ENCODE measurements at regions of chr1 and their contacts with region 1.

Region 1: GRCh38 chr1:108828022-108828961 is 28.6 kb downstream of the AKNAD1 start:
- DNase-seq: peak; percentile 76 to 82 (median 78)
- H3K4me3 ChIP-seq: no peak overlapping the region
- H3K27ac ChIP-seq: no peak overlapping the region
- H3K4me1 ChIP-seq: peaks cover 0 to 22% (median 12%) of the 10 kb centered on the region in 4 experiments
- H3K27me3 ChIP-seq: no peaks in the 10 kb centered on the region

Region 2: GRCh38 chr1:108661030-108661620 is 167.2 kb before region 1 on chr1 and contains the start of gene HENMT1:
- CTCF ChIA-PET with region 1: no interaction called
- POLR2A ChIA-PET with region 1: no interaction called
- DNase-seq: peak; percentile 91 to 95 (median 94)
- H3K4me3 ChIP-seq: peak within 1 kb of the TSS; percentile 35 to 80 (median 63)
- H3K27ac ChIP-seq: peak within 1 kb of the TSS; percentile 89 to 94
- H3K4me1 ChIP-seq: peaks cover 17 to 58% (median 32%) of the 10 kb centered on the region in 4 experiments
- H3K27me3 ChIP-seq: no peaks in the 10 kb centered on the region

Region 3: GRCh38 chr1:108691942-108692723 is 136.2 kb before region 1 on chr1 and contains the start of gene PRPF38B:
- CTCF ChIA-PET with region 1: no interaction called
- POLR2A ChIA-PET with region 1: no interaction called
- DNase-seq: peak; percentile 94 to 98 (median 97)
- H3K4me3 ChIP-seq: peak within 1 kb of the TSS; percentile 76 to 99 (median 88)
- H3K27ac ChIP-seq: peak within 1 kb of the TSS; percentile 91 to 98
- H3K4me1 ChIP-seq: peaks cover 9 to 49% (median 33%) of the 10 kb centered on the region in 4 experiments
- H3K27me3 ChIP-seq: no peaks in the 10 kb centered on the region

Region 4: GRCh38 chr1:108816049-108816893 is 12.0 kb before region 1 on chr1:
- CTCF ChIA-PET with region 1: interaction called, 14 read pairs
- POLR2A ChIA-PET with region 1: no interaction called
- DNase-seq: peak in 1 of 3 donors; percentile 19
- H3K4me3 ChIP-seq: peak overlapping the region in 1 of 7 experiments; percentile 7
- H3K27ac ChIP-seq: no peak overlapping the region
- H3K4me1 ChIP-seq: peaks cover 0 to 7% (median 4%) of the 10 kb centered on the region in 4 experiments
- H3K27me3 ChIP-seq: no peaks in the 10 kb centered on the region

Region 5: GRCh38 chr1:108852221-108852975 is 24.1 kb after region 1 on chr1:
- CTCF ChIA-PET with region 1: interaction called, 244 read pairs
- POLR2A ChIA-PET with region 1: interaction called, 7 read pairs
- DNase-seq: peak; percentile 38 to 89 (median 85)
- H3K4me3 ChIP-seq: peak overlapping the region in 5 of 7 experiments; percentile 8 to 63 (median 37)
- H3K27ac ChIP-seq: peak overlapping the region; percentile 93
- H3K4me1 ChIP-seq: peaks cover 24 to 79% (median 58%) of the 10 kb centered on the region in 4 experiments
- H3K27me3 ChIP-seq: no peaks in the 10 kb centered on the region

Region 6: DNA sequence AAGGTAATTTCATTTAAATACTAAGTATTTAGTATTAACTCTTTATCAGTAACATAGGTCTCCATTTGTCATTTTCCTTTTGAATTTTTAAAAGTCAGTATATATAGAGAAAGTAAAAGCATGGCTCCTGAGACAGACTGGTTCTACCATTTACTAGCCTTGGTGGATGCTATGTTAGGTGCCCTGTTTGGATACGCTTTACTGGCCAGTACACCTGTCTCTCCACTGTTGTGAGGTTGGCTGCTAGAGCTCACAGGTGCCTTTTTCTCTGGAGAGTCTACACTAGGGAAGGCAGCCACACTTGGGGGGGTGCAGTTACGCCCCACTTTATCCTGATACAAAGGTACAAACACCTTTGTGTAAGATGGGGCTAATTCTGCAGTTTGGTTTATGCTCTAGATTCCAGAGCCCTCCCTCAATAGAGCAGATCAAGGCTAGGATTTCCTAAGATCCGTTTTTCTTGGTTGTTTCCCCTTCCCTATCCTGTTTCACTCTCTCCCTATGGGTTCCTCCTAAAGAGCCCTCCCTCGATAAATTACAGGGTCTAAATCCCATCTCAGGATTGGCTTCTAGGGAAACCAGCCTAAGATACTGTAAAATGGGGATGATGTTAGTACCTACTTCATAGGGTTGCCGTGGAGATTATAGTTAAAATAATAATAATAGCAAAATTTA is 42.9 kb after region 1 on chr1:
- CTCF ChIA-PET with region 1: interaction called, 11 read pairs
- POLR2A ChIA-PET with region 1: no interaction called
- DNase-seq: no peak
- H3K4me3 ChIP-seq: no peak overlapping the region
- H3K27ac ChIP-seq: no peak overlapping the region
- H3K4me1 ChIP-seq: peaks cover 0 to 5% (median 2%) of the 10 kb centered on the region in 4 experiments
- H3K27me3 ChIP-seq: no peaks in the 10 kb centered on the region

Region 7: DNA sequence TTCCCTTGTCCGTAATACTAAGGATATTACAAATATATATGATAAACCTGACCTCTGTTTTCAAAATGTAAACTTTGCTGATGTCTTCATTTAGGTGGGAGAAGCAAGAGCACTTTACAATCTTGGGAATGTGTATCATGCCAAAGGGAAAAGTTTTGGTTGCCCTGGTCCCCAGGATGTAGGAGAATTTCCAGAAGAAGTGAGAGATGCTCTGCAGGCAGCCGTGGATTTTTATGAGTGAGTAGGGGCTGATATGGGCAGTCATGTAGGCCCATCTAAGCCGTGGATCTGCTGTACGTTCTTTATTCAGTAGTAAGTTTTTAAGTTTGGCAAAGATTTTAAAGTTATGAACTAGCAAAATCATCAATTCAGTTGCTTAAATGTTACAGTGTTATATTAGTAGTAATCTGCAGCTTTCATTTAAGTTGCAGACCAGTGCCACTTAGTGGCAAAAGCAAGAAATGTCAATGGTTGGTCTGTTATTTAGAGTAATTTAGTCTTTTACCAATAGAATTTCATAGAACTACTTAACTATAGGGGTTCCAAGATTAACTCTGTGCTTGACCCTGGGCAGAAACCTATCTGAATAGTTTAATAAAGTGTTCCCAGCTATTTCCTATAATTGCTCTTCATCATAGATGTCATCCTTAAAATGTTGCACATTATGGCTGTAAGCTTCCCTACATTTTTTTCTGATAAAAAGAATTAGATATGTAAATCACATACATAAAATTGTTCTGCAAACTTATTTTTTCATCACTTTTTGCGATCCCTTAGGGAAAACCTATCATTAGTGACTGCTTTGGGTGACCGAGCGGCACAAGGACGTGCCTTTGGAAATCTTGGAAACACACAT is 69.8 kb after region 1 on chr1:
- CTCF ChIA-PET with region 1: interaction called, 430 read pairs
- POLR2A ChIA-PET with region 1: interaction called, 4 read pairs
- DNase-seq: peak; percentile 77 to 88 (median 86)
- H3K4me3 ChIP-seq: no peak overlapping the region
- H3K27ac ChIP-seq: no peak overlapping the region
- H3K4me1 ChIP-seq: peaks cover 0 to 22% (median 3%) of the 10 kb centered on the region in 4 experiments
- H3K27me3 ChIP-seq: no peaks in the 10 kb centered on the region

Region 8: GRCh38 chr1:108933944-108934343 is 105.7 kb after region 1 on chr1:
- CTCF ChIA-PET with region 1: no interaction called
- POLR2A ChIA-PET with region 1: no interaction called
- DNase-seq: no peak
- H3K4me3 ChIP-seq: no peak overlapping the region
- H3K27ac ChIP-seq: no peak overlapping the region
- H3K4me1 ChIP-seq: no peaks in the 10 kb centered on the region
- H3K27me3 ChIP-seq: no peaks in the 10 kb centered on the region

Measured in common myeloid progenitor, CD34-positive (primary cell).